PC-3 (cell line): ENCODE measurements at regions of chr3 and their contacts with region 1.

Region 1: DNA sequence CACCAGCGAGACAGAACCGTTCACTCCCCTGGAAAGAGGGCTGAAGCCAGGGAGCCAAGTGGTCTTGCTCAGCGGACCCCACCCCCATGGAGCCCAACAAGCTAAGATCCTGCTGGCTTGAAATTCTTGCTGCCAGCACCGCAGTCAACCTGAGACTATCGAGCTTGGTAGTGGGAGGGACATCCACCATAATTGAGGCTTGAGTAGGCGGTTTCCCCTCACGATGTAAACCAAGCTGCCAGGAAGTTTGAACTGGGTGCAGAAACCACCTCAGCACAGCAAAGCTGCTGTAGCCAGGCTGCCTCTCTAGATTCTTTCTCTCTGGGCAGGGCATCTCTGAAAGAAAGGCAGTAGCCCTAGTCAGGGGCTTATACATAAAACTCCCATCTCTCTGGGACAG is 151.0 kb downstream of the MBNL1 start:
- DNase-seq: no peak
- ATAC-seq: no peak
- H3K4me3 ChIP-seq: no peak overlapping the region
- H3K27ac ChIP-seq: no peak overlapping the region
- H3K4me1 ChIP-seq: 0 out of 2 replicates have a peak, but pooled peaks cover 5% of the 10 kb centered on the region
- H3K27me3 ChIP-seq: no peaks in the 10 kb centered on the region
- CTCF ChIP-seq: no peak

Region 2: GRCh38 chr3:151345859-151346258 is 1073.9 kb before region 1 on chr3:
- CTCF ChIA-PET with region 1: interaction called, 12 read pairs
- POLR2A ChIA-PET with region 1: no interaction called
- intact Hi-C with region 1: no loop called
- DNase-seq: peak; percentile 10
- ATAC-seq: no peak
- H3K4me3 ChIP-seq: 0 out of 2 replicates have a peak overlapping the region, but pooled peaks have one; percentile 9
- H3K27ac ChIP-seq: no peak overlapping the region
- H3K4me1 ChIP-seq: no peaks in the 10 kb centered on the region
- H3K27me3 ChIP-seq: no peaks in the 10 kb centered on the region
- CTCF ChIP-seq: no peak

Region 3: GRCh38 chr3:152196782-152197181 is 223.0 kb before region 1 on chr3:
- CTCF ChIA-PET with region 1: no interaction called
- POLR2A ChIA-PET with region 1: no interaction called
- intact Hi-C with region 1: no loop called
- DNase-seq: no peak
- ATAC-seq: no peak
- H3K4me3 ChIP-seq: no peak overlapping the region
- H3K27ac ChIP-seq: no peak overlapping the region
- H3K4me1 ChIP-seq: no peaks in the 10 kb centered on the region
- H3K27me3 ChIP-seq: no peaks in the 10 kb centered on the region
- CTCF ChIP-seq: no peak

Region 4: GRCh38 chr3:152430223-152431002 is 10.7 kb after region 1 on chr3:
- CTCF ChIA-PET with region 1: no interaction called
- POLR2A ChIA-PET with region 1: no interaction called
- intact Hi-C with region 1: no loop called
- DNase-seq: no peak
- ATAC-seq: 0 out of 2 replicates have a peak, but pooled peaks have one; percentile 22
- H3K4me3 ChIP-seq: no peak overlapping the region
- H3K27ac ChIP-seq: no peak overlapping the region
- H3K4me1 ChIP-seq: 0 out of 2 replicates have a peak, but pooled peaks cover 8% of the 10 kb centered on the region
- H3K27me3 ChIP-seq: no peaks in the 10 kb centered on the region
- CTCF ChIP-seq: no peak